GM18951 (cell line): ENCODE measurements at regions of chr9 and their contacts with region 1.

Region 1: GRCh38 chr9:32378993-32379729 is 5.3 kb upstream of the ACO1 start:
- POLR2A ChIP-seq: no peak

Region 2: DNA sequence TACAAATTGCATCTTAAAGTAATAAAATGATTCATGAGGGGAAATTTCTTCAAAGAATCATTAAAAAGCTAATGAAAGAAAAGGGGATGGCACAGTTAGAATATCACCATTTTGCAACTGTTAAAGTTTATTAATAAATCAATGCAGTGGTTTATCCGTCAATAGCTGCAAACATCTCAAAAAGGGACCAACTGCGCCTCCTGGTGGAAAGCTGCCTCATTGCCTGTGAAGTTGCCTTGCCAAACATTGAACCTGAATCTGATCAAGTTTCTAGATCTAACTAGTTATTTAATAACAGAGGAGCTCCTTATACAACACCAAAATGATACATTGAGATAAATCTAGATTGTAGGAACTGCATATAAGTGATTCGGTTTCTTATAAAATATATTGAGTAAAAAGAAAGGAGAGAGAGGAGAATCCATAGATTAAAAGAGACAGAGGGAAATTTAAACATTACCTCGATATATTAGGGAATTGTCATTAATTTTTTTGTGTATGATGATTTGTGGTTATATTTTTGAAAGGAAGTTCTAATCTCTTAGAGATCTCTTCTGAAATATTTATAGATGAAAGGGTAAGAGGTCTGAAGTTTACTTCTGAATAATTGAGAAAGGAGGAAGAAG is 200.7 kb after region 1 on chr9:
- in situ Hi-C with region 1: loop called (anchors 5 kb)
- POLR2A ChIP-seq: no peak

Region 3: DNA sequence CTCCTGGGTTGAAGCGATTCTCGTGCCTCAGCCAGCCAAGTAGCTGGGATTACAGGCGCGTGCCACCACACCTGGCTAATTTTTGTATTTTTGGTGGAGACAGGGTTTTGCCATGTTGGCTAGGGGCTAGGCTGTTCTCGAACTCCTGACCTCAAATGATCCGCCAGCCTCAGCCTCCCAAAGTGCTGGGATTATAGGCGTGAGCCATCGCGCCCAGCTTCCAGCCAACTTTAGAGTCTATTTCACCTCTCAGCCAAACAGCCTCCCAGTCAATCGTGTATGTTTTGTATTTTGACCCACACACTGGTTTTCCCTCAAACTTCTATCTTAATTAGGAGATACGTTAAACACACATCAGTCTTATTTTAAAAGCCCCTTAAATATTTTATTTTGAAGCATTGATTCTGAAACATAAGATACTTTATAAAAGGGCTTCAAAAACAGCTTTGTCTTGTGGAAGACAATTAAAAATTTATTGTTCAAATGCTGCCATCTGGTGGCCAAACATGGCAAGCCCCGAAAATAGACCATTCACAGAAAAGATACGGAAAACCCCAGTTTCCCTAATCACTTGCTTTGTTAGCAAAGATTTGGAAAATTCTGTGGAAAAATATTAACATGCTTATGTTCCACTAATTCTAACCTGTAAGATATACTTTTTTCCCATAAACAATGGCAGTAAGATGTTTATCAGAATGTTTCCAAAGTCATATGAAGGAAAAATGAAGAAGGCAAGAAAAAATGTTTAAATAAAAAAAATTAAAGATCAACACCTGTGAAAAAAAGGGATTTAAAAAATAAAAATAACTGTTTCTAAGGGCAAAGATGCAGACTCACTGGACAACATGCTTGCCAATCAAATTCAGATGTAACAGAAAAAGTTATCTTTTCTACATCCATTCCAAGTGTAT is 589.2 kb after region 1 on chr9:
- in situ Hi-C with region 1: loop called (anchors 10 kb)
- POLR2A ChIP-seq: no peak